WTC11 (cell line): ENCODE measurements at regions of chr9 and their contacts with region 1.

Region 1: DNA sequence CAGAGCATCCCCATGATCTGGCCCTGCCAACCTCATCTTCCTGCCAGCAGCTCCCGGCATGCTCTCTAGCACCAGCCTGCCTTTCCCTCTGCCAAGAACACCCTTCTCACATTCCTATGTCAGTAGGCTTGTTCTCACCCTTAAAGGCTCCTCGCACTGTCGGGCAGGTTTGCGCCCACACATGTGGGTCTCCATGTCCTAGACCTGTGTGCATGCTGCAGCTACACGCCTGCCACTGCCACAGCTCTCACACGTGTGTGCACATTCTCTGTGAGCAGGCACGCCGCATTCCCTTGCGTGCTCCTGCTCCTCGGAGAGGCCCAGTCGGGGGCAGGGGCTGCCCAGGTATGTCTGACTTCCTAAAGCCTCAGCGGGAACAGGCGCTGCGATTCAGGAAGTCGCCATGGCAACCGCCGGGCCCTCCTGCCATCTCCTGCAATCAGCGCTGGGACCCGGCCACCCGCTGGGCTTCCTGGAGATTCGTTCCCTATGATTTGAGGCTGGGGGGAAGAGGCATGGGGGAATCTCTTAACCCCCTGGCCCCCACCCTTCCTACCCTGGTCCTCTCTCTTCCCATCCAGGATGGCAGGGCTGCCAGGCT is 28.1 kb downstream of the NDUFA8 start:
- DNase-seq: peak; percentile 79
- ATAC-seq: peak; percentile 61
- H3K4me3 Mint-ChIP-seq: peak overlapping the region; percentile 43
- H3K27ac Mint-ChIP-seq: no peak overlapping the region
- H3K4me1 Mint-ChIP-seq: peaks cover 53% of the 10 kb centered on the region
- H3K27me3 Mint-ChIP-seq: peaks cover 31% of the 10 kb centered on the region
- CTCF ChIP-seq: no peak

Region 2: DNA sequence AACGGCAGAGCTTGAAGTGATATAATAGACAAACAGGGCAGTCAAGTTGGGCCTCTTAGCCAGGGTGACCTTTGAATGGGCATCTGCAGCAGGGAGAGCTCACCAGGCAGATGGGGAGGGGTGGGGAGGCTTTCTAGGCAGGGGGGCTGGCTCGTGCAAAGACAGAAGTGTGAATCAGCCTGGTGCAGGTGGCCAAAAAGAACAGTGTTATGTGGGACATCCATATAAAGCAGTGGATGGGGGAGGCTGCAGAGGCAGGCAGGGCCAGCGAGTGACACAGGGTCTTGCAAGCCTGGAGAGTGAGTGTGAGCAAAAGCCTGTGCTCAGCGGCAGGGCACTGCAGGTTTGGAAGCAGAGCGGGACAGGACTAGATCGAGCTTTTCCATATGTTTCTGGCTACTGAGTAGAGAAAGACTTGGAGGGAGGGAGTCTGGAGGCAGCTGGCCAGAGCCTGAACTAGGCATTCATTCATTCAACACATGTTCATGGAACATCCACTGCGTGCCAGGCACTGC is 24.2 kb before region 1 on chr9:
- CTCF ChIA-PET with region 1: no interaction called
- POLR2A ChIA-PET with region 1: no interaction called
- DNase-seq: no peak
- ATAC-seq: no peak
- H3K4me3 Mint-ChIP-seq: no peak overlapping the region
- H3K27ac Mint-ChIP-seq: no peak overlapping the region
- H3K4me1 Mint-ChIP-seq: peaks cover 12% of the 10 kb centered on the region
- H3K27me3 Mint-ChIP-seq: no peaks in the 10 kb centered on the region; the same call in 1 of the 2 replicates
- CTCF ChIP-seq: no peak

Region 3: DNA sequence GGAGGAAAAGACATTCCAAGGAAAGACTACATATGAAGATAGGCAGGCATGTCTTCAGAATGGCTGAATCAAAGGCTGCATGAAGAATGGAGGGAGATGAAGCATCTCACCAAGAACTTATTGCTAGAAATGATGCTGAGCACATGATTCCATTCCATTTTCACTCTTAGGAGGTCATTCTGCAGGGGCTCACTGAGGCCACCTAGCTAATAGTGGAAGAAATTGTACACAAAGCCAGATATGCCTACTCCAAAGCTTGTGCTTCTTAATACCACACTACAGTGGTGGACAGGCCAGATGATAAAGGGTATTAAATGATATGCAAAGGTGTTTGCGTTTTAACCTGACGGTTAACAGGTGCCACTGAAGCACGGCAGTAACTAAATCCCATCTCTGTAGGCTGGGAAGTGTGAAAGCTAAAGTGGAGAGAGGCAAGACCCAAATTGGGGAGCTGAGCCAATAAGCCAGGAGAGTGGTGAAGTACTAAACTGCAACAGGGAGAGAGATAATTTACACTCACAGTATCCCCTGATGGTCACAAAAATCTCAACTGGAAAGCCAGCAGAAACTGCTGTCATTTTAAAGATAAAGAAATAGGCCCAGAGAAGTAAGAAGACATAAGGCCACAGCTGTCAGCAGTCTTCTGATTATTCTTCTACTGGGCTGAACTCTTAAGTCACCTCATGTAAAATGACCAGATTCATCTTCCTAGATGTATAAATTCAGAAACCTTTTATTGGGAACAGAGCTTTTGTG is 13.5 kb after region 1 on chr9:
- CTCF ChIA-PET with region 1: interaction called, 60 read pairs
- POLR2A ChIA-PET with region 1: no interaction called
- DNase-seq: no peak
- ATAC-seq: no peak; the same call in 1 of the 2 replicates
- H3K4me3 Mint-ChIP-seq: no peak overlapping the region
- H3K27ac Mint-ChIP-seq: no peak overlapping the region
- H3K4me1 Mint-ChIP-seq: no peaks in the 10 kb centered on the region
- H3K27me3 Mint-ChIP-seq: no peaks in the 10 kb centered on the region
- CTCF ChIP-seq: no peak

Region 4: DNA sequence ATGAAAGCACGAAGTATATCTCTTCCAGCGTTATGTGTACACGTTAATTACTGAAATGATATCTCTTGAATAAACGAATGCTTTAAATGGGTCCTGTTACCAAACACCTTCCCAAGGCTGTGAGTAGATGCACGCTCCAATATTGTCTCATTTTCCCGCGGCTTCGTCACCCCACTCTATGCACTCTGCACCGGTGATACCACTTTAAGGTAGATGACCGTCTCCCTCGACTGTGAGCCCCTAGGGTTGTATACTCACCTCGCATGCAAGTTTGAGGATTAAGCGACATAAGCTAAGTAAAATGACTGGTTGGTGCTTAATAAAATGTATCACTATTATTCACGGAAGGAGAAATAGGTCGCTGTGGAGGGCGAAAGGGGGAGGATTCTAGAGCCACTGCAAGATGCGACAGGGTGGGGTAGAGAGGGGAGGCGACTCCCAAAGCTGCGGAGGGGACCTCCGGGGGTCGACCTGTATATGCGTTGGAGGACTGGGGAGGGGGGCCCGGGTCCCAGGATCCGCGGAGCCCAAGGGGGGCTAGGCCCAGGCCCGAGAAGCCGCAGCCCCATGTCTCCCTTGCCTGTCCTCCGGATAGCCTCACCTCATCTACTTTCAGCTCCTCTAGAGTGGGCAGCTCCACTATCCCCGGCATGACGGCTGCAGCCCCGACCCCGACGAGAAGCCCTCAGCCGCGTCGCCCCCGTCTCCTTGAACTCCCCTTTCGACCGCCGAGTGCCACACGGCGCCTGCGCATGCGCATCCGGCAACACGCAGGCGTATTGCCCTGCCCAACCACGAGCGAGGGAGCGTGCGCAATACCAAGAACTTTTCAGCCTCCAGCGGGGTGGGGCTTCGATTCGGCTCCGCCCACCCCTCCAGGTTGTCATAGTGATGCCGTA is 27.8 kb after region 1 on chr9 and contains the starts of genes MORN5 and NDUFA8:
- CTCF ChIA-PET with region 1: interaction called, 24 read pairs
- POLR2A ChIA-PET with region 1: no interaction called
- DNase-seq: peak; percentile 99
- ATAC-seq: peak; percentile 96
- H3K4me3 Mint-ChIP-seq: peak within 1 kb of the TSS; percentile 96
- H3K27ac Mint-ChIP-seq: peak within 1 kb of the TSS; percentile 93
- H3K4me1 Mint-ChIP-seq: peaks cover 19% of the 10 kb centered on the region
- H3K27me3 Mint-ChIP-seq: peaks cover 31% of the 10 kb centered on the region
- CTCF ChIP-seq: no peak
- total RNA-seq, gene MORN5: not detected in 3 replicates
- total RNA-seq, gene NDUFA8: 70.7 to 71.8 TPM (median 71.2 TPM) in 3 replicates

Region 5: DNA sequence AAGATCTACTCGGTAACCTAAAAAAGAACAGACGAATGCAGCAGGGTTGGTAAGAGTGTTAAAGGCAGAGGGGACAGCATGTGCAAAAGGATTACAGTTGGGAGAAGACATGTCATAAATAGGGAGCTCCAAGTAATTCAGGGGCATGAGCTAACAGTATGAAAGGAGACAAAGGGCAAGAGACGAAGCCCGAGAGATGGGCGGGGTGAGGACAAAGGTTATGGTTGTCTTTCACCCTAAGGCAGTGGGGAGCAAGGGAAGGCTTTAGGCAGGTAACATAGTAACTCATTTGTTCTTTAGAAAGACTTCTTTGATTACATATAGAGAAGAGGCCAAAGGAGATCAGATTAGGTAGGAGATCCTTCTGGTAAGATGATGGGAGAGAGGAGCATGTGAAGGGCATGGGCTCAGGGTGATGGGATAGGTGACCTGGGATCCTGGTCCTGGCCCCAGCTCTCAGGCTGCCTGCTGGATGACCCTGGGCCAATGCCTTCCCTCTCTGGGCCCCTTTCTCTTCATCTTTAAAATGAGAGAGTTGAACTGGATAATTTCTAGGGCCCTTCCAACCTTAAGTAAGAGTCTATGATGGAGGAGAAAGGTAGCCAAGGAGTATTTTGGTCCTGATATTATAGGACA is 47.7 kb after region 1 on chr9:
- CTCF ChIA-PET with region 1: no interaction called
- POLR2A ChIA-PET with region 1: no interaction called
- DNase-seq: no peak
- ATAC-seq: no peak
- H3K4me3 Mint-ChIP-seq: no peak overlapping the region
- H3K27ac Mint-ChIP-seq: no peak overlapping the region
- H3K4me1 Mint-ChIP-seq: no peaks in the 10 kb centered on the region
- H3K27me3 Mint-ChIP-seq: peaks cover under 1% of the 10 kb centered on the region; the same call in 1 of the 2 replicates
- CTCF ChIP-seq: no peak